Breast epithelium (tissue), 4 donors: ENCODE measurements at regions of chr6 and their contacts with region 1.

Region 1: GRCh38 chr6:132749111-132749510 is 8.6 kb downstream of the VNN2 start:
- DNase-seq: no peak
- H3K4me3 ChIP-seq: no peak overlapping the region
- H3K27ac ChIP-seq: no peak overlapping the region
- H3K4me1 ChIP-seq: no peaks in the 10 kb centered on the region
- H3K27me3 ChIP-seq: no peaks in the 10 kb centered on the region
- CTCF ChIP-seq: no peak
- POLR2A ChIP-seq: no peak

Region 2: DNA sequence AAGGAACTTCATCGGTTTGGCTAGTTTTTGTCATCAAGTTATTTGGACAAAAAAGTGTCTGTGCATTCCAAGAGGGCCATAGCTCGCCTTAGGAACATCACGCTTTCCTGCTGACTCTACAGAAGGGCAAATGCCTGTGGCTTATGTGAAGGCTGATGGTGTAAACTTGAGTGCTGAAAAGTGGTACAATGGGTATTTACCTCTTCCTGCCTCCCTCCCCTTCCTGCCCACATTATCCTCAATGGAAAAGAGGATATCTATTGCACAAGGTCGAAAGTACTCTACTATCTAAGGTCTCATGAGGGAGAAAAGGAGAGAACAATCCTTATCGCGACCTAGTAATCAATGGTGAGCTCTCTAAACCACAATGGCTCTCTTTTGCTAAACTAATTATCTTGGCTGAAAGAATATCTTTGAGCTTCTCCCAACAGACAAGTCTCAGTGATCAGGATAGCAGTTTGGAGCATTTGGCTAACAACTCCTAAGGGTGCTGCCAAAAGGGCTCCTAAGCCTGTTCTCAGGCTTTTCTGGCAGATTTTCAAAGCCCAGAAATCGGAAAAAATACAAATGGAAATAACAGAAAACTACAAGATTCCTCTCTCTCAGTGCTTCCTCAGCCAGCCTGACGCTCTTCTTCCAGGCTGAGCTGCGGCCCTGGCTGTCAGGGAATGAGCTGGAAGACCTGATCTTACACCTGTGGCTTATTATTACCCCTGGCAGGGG is 983.9 kb before region 1 on chr6:
- intact Hi-C with region 1: no loop called
- DNase-seq: peak in 1 of 2 donors; percentile 56
- H3K4me3 ChIP-seq: peak overlapping the region in 1 of 3 donors; percentile 28
- H3K27ac ChIP-seq: peak overlapping the region; percentile 77 to 86
- H3K4me1 ChIP-seq: peaks cover 0 to 6% of the 10 kb centered on the region in 2 donors
- H3K27me3 ChIP-seq: no peaks in the 10 kb centered on the region
- CTCF ChIP-seq: no peak
- POLR2A ChIP-seq: no peak

Region 3: DNA sequence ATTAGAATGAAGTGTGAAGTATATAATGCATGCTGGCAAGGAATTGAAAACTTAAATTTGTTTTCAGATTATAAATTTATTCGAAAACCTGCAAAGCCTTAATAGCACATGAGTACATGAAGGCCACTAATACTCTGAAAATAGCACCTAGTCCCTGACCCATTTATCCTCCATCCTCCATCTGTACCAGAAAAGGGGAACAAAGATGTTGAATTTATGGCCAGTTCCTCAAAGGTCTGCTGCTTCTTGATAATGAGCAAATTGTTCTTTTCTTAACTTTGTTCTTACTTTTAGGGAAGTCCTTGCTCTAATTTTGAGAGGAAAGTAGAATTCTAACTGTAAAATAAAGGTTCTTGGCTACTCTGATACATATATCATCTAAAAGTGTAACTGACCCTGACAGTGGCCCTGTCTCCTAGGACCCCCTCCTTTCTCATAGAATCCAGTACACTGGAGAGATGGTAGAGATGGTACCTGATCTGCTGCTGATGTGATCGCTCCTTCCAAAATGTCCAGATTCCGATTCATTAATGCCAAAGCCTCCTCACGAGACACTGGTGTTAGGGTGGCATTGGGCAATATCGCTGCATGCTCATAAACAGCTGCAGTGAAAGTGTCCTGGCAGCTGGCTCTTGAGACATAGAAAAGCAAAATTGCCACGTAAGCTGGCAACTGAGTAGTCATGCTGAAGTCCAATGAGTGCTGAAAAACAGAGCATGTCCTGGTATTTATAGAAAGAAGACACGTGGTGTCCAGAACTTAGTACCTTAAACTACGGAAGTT is 35.6 kb before region 1 on chr6 and contains the start of gene VNN1:
- intact Hi-C with region 1: loop called (anchors 2 kb)
- DNase-seq: no peak
- H3K4me3 ChIP-seq: no peak within 1 kb of the TSS
- H3K27ac ChIP-seq: no peak within 1 kb of the TSS
- H3K4me1 ChIP-seq: no peaks in the 10 kb centered on the region
- H3K27me3 ChIP-seq: no peaks in the 10 kb centered on the region
- CTCF ChIP-seq: no peak
- POLR2A ChIP-seq: no peak
- total RNA-seq, gene VNN1: 0.98 to 8.6 (median 2.6) TPM

Region 4: GRCh38 chr6:133432021-133432989 is 683.2 kb after region 1 on chr6:
- intact Hi-C with region 1: no loop called
- DNase-seq: no peak
- H3K4me3 ChIP-seq: no peak overlapping the region
- H3K27ac ChIP-seq: no peak overlapping the region
- H3K4me1 ChIP-seq: no peaks in the 10 kb centered on the region
- H3K27me3 ChIP-seq: no peaks in the 10 kb centered on the region
- CTCF ChIP-seq: no peak
- POLR2A ChIP-seq: no peak